ENCODE measurements at regions of chr5 and their contacts with region 1.

Region 1: DNA sequence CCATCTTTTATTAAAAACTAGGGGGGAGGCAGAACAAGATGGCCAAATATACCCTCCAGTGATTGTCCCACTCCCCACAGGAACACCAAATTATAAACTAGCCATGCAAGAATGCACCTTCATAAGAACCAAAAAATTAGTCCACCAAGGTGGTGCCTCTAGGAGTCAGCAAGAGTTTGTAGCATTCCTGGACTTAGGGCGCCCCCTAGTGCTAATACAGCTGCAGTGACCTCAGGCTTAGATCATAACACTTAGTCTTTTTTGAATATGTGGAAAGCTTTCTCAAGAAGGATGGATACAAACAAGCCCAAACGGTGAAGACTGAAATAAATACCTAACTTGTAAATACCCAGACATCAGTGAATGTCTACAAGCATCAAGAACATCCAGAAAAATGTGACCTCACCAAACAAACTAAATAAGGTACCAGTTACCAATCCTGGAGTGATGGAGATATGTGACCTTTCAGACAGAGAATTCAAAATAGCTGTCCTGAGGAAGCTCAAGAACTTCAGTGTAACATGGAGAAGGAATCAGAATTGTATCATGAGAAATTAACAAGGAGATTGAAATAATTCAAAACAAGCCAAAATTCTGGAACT is 19.3 kb downstream of the PPIP5K2 start:
- DNase-seq: peak; percentile 67 to 84 (median 71)
- ATAC-seq: peak; percentile 99
- H3K4me3 ChIP-seq: no peak overlapping the region
- H3K27ac ChIP-seq: no peak overlapping the region
- H3K4me1 ChIP-seq: no peaks in the 10 kb centered on the region
- H3K27me3 ChIP-seq: no peaks in the 10 kb centered on the region
- CTCF ChIP-seq: peak; percentile 81 to 92 (median 88)
- EP300 ChIP-seq: no peak
- POLR2A ChIP-seq: no peak
- RAD21 ChIP-seq: peak; percentile 80 to 90

Region 2: DNA sequence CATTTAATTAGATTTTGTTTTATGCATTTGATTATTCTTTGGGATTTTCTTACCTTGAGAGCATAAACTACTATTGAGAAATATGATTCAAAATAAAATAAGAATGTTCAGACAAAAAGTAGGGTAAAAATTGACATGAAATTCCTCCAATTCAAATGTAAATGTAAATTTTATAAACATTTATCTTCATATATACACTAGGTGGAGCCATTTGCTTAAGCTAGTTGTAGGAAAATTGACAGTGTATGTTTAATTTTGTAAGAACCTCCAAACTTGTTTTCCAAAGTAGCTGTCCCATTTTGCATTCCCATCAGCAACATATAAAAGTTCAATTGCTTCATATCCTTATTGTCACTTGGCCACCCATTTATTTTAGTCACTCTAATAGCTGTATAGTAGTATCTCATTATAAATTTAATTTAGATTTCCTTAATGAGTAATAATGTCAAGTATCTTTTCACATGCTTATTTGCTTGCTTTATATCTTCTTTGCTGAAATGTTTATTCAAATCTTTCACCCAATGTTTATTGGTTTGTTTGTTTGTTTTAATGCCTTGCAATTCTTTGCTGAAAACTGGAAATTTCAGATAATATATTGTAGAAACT is 602.9 kb before region 1 on chr5:
- CTCF ChIA-PET with region 1: interaction called, 3 read pairs
- POLR2A ChIA-PET with region 1: no interaction called
- in situ Hi-C with region 1: no loop called
- intact Hi-C with region 1: loop called (anchors 5 kb)
- DNase-seq: no peak
- ATAC-seq: no peak
- H3K4me3 ChIP-seq: no peak overlapping the region
- H3K27ac ChIP-seq: no peak overlapping the region
- H3K4me1 ChIP-seq: no peaks in the 10 kb centered on the region
- H3K27me3 ChIP-seq: no peaks in the 10 kb centered on the region
- CTCF ChIP-seq: peak in 1 of 3 experiments; percentile 45; a peak in 2 of 6 replicates
- EP300 ChIP-seq: no peak
- POLR2A ChIP-seq: no peak
- RAD21 ChIP-seq: peak; percentile 42 to 47

Region 3: DNA sequence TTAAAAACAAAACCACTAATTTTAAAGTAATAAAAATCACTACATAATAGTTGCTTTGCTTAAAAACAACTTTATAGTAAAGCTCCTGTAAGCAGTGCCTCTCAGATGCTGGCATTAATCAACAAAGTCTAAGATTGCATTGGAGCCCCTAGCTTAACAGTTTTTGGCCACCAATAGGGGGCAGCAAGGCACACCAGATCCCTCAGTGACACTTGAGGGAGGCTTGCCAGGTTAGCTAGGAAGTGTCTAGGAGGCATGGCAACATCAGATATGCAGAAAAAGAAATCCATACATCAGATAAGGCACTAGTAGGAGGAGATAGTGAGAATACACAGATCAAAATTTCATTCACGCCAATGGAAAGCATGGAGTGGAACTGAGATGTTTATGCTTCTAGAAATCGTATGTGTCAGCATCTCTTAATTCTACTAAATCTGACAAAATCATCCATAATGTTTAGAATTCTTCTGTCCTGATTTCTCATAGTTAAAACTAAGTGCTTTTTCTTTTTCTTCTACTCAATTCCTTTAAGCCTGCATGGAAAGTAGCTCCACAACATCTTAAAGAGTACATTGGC is 457.9 kb before region 1 on chr5:
- CTCF ChIA-PET with region 1: interaction called, 7 read pairs
- POLR2A ChIA-PET with region 1: no interaction called
- in situ Hi-C with region 1: no loop called
- intact Hi-C with region 1: loop called (anchors 1 kb)
- DNase-seq: peak; percentile 17 to 67 (median 37)
- ATAC-seq: peak; percentile 91
- H3K4me3 ChIP-seq: no peak overlapping the region
- H3K27ac ChIP-seq: no peak overlapping the region
- H3K4me1 ChIP-seq: no peaks in the 10 kb centered on the region
- H3K27me3 ChIP-seq: no peaks in the 10 kb centered on the region
- CTCF ChIP-seq: peak; percentile 61 to 74 (median 72)
- EP300 ChIP-seq: no peak
- POLR2A ChIP-seq: no peak
- RAD21 ChIP-seq: peak; percentile 63 to 72

Region 4: DNA sequence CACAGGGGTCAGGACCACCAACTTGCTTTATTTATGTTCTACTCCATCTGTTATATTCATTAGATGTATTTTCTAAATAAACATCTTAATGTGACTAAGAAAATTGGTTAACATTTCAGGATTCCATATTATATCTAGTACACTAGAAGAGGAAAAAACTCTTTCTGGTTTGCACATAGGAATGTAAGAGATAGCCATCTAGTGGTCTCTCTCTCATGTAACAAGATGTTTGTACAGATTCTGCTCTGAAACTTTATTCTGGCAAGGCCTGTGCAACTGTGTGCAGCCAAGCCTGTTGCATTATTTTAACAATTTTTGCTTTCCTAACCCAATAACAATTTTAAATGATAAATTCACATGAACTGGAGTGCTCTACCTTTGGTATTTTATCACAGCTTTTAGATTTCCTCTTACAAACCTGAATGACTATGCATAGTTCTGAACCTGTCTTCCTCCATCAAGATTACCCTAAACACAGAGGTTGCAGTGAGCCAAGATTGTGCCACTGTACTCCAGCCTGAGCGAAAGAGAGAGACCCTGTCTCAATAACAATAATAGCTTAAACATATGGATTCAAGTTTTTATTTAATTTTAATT is 167.6 kb before region 1 on chr5:
- CTCF ChIA-PET with region 1: no interaction called
- POLR2A ChIA-PET with region 1: no interaction called
- in situ Hi-C with region 1: no loop called
- intact Hi-C with region 1: loop called (anchors 5 kb)
- DNase-seq: peak in 1 of 4 experiments; percentile 5
- ATAC-seq: peak; percentile 76
- H3K4me3 ChIP-seq: no peak overlapping the region
- H3K27ac ChIP-seq: no peak overlapping the region
- H3K4me1 ChIP-seq: no peaks in the 10 kb centered on the region
- H3K27me3 ChIP-seq: no peaks in the 10 kb centered on the region
- CTCF ChIP-seq: peak in 1 of 3 experiments; percentile 40; a peak in 2 of 6 replicates
- EP300 ChIP-seq: no peak
- POLR2A ChIP-seq: no peak
- RAD21 ChIP-seq: peak; percentile 16 to 65; a peak in 2 of 4 replicates

Region 5: DNA sequence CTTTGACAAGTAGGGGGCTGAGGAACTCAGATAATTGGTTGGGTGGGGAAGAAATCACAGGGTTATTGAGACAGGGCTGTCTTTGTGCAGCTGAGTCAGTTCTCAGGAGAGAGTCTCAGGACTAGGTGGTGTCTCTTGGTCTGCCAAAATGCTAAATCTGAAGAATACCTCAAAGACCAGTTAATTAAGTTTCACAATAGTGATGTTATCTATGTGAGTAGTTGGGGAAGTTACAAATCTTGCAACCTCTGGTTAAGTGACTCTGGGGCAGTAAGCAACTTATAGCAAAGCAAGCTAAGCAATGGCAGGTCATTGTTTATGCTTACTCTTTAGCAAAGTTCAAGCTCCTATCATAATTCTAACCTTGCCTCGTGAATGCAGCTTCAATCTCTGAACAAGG is 73.0 kb before region 1 on chr5:
- CTCF ChIA-PET with region 1: interaction called, 3 read pairs
- POLR2A ChIA-PET with region 1: no interaction called
- in situ Hi-C with region 1: no loop called
- intact Hi-C with region 1: loop called (anchors 2 kb)
- DNase-seq: no peak
- ATAC-seq: no peak
- H3K4me3 ChIP-seq: no peak overlapping the region
- H3K27ac ChIP-seq: no peak overlapping the region
- H3K4me1 ChIP-seq: no peaks in the 10 kb centered on the region
- H3K27me3 ChIP-seq: no peaks in the 10 kb centered on the region
- CTCF ChIP-seq: no peak
- EP300 ChIP-seq: no peak
- POLR2A ChIP-seq: no peak
- RAD21 ChIP-seq: no peak

Region 6: GRCh38 chr5:103356350-103357091 is 217.2 kb after region 1 on chr5:
- CTCF ChIA-PET with region 1: no interaction called
- POLR2A ChIA-PET with region 1: no interaction called
- in situ Hi-C with region 1: no loop called
- intact Hi-C with region 1: no loop called
- DNase-seq: no peak
- ATAC-seq: no peak
- H3K4me3 ChIP-seq: no peak overlapping the region
- H3K27ac ChIP-seq: no peak overlapping the region
- H3K4me1 ChIP-seq: no peaks in the 10 kb centered on the region
- H3K27me3 ChIP-seq: no peaks in the 10 kb centered on the region; a peak in 1 of 5 replicates
- CTCF ChIP-seq: no peak
- EP300 ChIP-seq: no peak
- POLR2A ChIP-seq: no peak
- RAD21 ChIP-seq: no peak

Measured in K562 (cell line).